B cell (primary cell): ENCODE measurements at regions of chr15 and their contacts with region 1.

Region 1: GRCh38 chr15:99361541-99362185 is 110.4 kb downstream of the LRRC28 start:
- DNase-seq: no peak
- ATAC-seq: no peak
- H3K4me3 ChIP-seq: no peak overlapping the region
- H3K4me3 Mint-ChIP-seq: no peak overlapping the region
- H3K27ac ChIP-seq: no peak overlapping the region
- H3K27ac Mint-ChIP-seq: no peak overlapping the region
- H3K4me1 ChIP-seq: peaks cover 12 to 13% of the 10 kb centered on the region in 2 donors
- H3K4me1 Mint-ChIP-seq: peaks cover 20% of the 10 kb centered on the region
- H3K27me3 ChIP-seq: no peaks in the 10 kb centered on the region
- H3K27me3 Mint-ChIP-seq: no peaks in the 10 kb centered on the region
- CTCF ChIP-seq: peak; percentile 47

Region 2: DNA sequence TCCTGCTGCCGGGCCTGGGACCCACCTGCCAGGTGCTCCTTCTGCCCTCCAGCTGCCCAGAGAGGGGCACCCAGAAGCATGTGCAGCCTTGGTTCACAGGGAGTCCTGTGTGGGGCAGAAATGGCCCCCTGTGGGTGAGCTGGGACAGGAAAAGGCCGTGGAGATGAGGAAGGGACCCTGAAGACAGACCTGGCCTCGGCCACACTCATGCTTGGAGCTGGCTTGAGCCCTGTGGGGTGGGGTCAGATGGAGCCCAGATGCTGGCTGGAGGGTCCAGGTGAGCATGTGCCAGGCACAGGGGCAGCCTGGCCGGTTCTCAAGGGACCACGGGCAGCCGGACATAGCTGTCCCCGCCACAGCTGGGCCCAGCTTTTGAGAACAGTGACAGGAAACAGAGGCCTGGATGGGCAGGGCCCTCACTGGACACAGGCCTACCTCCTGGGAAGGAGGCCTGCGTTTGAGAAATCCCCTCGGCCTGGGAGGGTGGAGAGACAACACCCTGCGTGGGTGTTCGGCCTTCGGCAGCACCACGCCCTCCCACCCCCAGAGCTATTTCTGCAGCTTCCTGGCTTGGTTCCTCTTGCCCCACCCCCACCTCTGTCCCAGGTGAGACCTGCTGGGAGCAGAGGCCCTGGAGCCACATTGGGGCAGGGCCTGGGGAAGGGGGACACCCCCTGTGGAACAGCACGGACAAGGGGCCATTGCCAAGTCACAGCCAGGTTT is 71.5 kb after region 1 on chr15:
- CTCF ChIA-PET with region 1: no interaction called
- POLR2A ChIA-PET with region 1: no interaction called
- intact Hi-C with region 1: loop called (anchors 10 kb)
- DNase-seq: peak; percentile 74
- ATAC-seq: peak; percentile 75
- H3K4me3 ChIP-seq: no peak overlapping the region
- H3K4me3 Mint-ChIP-seq: peak overlapping the region; percentile 44
- H3K27ac ChIP-seq: peak overlapping the region; percentile 85 to 87
- H3K27ac Mint-ChIP-seq: peak overlapping the region; percentile 88
- H3K4me1 ChIP-seq: peaks cover 49 to 62% of the 10 kb centered on the region in 2 donors
- H3K4me1 Mint-ChIP-seq: peaks cover 68% of the 10 kb centered on the region
- H3K27me3 ChIP-seq: no peaks in the 10 kb centered on the region
- H3K27me3 Mint-ChIP-seq: no peaks in the 10 kb centered on the region
- CTCF ChIP-seq: no peak

Region 3: GRCh38 chr15:99545605-99546004 is 183.9 kb after region 1 on chr15:
- CTCF ChIA-PET with region 1: no interaction called
- POLR2A ChIA-PET with region 1: no interaction called
- intact Hi-C with region 1: loop called (anchors 10 kb)
- DNase-seq: no peak
- ATAC-seq: no peak
- H3K4me3 ChIP-seq: no peak overlapping the region
- H3K4me3 Mint-ChIP-seq: no peak overlapping the region
- H3K27ac ChIP-seq: no peak overlapping the region
- H3K27ac Mint-ChIP-seq: no peak overlapping the region
- H3K4me1 ChIP-seq: no peaks in the 10 kb centered on the region
- H3K4me1 Mint-ChIP-seq: no peaks in the 10 kb centered on the region
- H3K27me3 ChIP-seq: no peaks in the 10 kb centered on the region
- H3K27me3 Mint-ChIP-seq: no peaks in the 10 kb centered on the region
- CTCF ChIP-seq: no peak